ENCODE measurements at regions of chr17 and their contacts with region 1.

Region 1: DNA sequence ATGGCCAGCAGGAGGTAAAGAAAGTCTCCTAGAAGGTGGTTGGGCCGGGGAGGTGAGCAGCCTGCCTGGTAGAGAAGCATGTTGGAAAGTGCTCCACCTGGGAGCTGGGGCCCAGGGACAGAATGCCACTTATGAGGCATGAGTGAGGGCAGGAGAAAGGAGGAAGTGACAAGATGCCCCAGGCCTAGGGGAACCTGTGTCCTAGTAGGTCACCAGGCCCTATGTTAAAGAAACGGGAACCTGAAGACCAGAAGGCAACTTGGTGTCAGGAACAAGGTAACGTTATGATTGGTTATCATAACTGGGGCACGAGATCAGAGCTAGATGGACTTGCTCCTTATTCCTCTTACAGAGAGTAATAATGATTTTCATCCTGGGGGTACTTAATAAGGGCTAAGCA is 34.3 kb downstream of the PITPNC1 start:
- DNase-seq: no peak
- H3K4me3 ChIP-seq: no peak overlapping the region
- H3K27ac ChIP-seq: no peak overlapping the region
- H3K4me1 ChIP-seq: peaks cover 26% of the 10 kb centered on the region
- H3K27me3 ChIP-seq: no peaks in the 10 kb centered on the region
- CTCF ChIP-seq: no peak
- POLR2A ChIP-seq: no peak

Region 2: GRCh38 chr17:67095803-67096202 is 315.6 kb before region 1 on chr17:
- intact Hi-C with region 1: no loop called
- DNase-seq: no peak
- H3K4me3 ChIP-seq: no peak overlapping the region
- H3K27ac ChIP-seq: no peak overlapping the region
- H3K4me1 ChIP-seq: no peaks in the 10 kb centered on the region
- H3K27me3 ChIP-seq: no peaks in the 10 kb centered on the region
- CTCF ChIP-seq: no peak
- POLR2A ChIP-seq: no peak

Region 3: DNA sequence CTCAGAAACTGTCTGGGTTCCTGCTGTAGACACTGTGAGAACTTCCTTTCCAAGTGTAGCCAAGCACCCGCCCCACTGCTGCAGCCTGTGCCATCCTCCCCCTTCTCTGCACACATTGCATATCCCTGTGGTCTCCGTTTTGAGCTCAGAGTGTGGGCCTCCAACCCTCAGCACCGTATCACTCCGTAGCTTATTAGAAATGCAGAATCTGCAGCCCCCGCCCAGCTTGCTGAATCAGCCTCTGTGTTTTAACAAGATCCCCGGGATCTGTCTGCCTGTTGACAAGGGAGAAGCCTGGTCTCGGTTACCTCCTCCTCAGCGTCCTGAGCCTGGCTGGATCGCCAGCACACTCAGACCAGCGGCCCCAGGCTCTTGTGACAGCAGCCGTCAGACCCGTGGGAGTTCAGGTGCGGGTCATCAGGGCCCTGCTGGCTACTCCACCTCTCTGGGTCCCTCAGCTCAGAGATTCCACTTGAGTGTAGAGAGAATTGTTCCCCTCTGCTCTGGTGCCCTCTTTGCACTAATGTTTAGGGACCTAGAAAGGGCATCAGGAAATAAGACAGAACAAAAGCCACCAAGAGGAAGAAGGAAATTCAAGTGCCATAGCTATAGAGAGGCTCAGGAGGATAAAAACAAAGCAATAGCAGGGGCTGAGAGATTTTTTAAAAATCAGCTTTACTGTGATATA is 58.0 kb after region 1 on chr17:
- intact Hi-C with region 1: loop called (anchors 10 kb)
- DNase-seq: no peak
- H3K4me3 ChIP-seq: no peak overlapping the region
- H3K27ac ChIP-seq: peak overlapping the region; percentile 40
- H3K4me1 ChIP-seq: peaks cover 23% of the 10 kb centered on the region
- H3K27me3 ChIP-seq: no peaks in the 10 kb centered on the region
- CTCF ChIP-seq: no peak
- POLR2A ChIP-seq: no peak